ENCODE measurements at regions of chr15 and their contacts with region 1.

Region 1: GRCh38 chr15:52331490-52332240 is 36.1 kb upstream of the MYO5C start:
- DNase-seq: peak in 8 of 9 experiments; percentile 25 to 84 (median 44)
- ATAC-seq: peak; percentile 99
- H3K4me3 ChIP-seq: no peak overlapping the region
- H3K4me3 Mint-ChIP-seq: no peak overlapping the region
- H3K27ac ChIP-seq: peak overlapping the region in 1 of 2 experiments; percentile 14
- H3K27ac Mint-ChIP-seq: peak overlapping the region; percentile 45
- H3K4me1 ChIP-seq: peaks cover 10% of the 10 kb centered on the region
- H3K4me1 Mint-ChIP-seq: peaks cover 12% of the 10 kb centered on the region
- H3K27me3 ChIP-seq: no peaks in the 10 kb centered on the region
- H3K27me3 Mint-ChIP-seq: no peaks in the 10 kb centered on the region
- CTCF ChIP-seq: peak; percentile 63

Region 2: DNA sequence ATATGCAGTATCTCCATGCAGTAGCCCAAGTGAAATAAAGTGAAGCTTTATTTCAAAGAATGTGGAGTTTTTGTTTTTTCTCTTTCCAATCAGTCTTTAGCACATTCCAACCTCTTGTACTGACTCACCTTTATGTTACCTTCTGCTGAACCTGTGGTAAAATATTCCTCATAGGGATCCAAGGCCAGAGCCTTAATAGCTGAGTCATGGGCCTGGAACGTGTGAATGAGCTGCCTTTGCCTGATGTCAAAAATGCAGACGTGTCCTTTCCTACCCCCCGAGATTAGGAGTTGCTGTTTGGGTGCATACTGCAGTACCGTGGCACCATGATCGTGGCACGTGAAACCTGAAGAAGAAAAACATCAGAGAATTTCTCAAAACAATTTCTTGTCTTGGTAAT is 881.7 kb before region 1 on chr15:
- CTCF ChIA-PET with region 1: no interaction called
- POLR2A ChIA-PET with region 1: no interaction called
- intact Hi-C with region 1: no loop called
- DNase-seq: no peak
- ATAC-seq: no peak
- H3K4me3 ChIP-seq: no peak overlapping the region
- H3K4me3 Mint-ChIP-seq: no peak overlapping the region
- H3K27ac ChIP-seq: no peak overlapping the region
- H3K27ac Mint-ChIP-seq: no peak overlapping the region
- H3K4me1 ChIP-seq: no peaks in the 10 kb centered on the region
- H3K4me1 Mint-ChIP-seq: no peaks in the 10 kb centered on the region
- H3K27me3 ChIP-seq: no peaks in the 10 kb centered on the region
- H3K27me3 Mint-ChIP-seq: no peaks in the 10 kb centered on the region
- CTCF ChIP-seq: no peak

Region 3: DNA sequence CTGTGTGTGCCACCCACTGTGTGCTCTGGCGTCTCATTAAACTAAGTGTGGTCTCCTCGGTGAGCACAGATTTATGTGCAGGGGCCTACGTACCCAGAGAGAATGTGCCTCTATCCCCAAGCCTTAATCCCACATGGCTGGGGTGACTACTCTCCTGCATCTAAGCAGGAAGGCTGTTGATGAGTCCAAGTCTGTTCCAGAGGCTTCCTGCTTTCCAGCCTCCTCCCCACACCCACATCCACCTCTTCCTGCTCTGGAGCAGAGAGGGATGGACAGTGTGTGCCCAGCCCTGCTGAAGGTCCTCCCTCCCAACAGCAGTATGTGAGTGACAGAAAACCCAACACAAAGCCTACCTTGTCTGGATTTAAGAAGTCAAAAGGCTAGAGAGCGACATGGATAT is 180.3 kb before region 1 on chr15:
- CTCF ChIA-PET with region 1: no interaction called
- POLR2A ChIA-PET with region 1: no interaction called
- intact Hi-C with region 1: no loop called
- DNase-seq: no peak
- ATAC-seq: no peak
- H3K4me3 ChIP-seq: no peak overlapping the region
- H3K4me3 Mint-ChIP-seq: no peak overlapping the region
- H3K27ac ChIP-seq: no peak overlapping the region
- H3K27ac Mint-ChIP-seq: no peak overlapping the region
- H3K4me1 ChIP-seq: no peaks in the 10 kb centered on the region
- H3K4me1 Mint-ChIP-seq: peaks cover 6% of the 10 kb centered on the region
- H3K27me3 ChIP-seq: no peaks in the 10 kb centered on the region
- H3K27me3 Mint-ChIP-seq: no peaks in the 10 kb centered on the region
- CTCF ChIP-seq: no peak

Region 4: GRCh38 chr15:52466134-52466701 is 134.6 kb after region 1 on chr15:
- CTCF ChIA-PET with region 1: no interaction called
- POLR2A ChIA-PET with region 1: no interaction called
- intact Hi-C with region 1: loop called in 1 of 2 experiments (anchors 1 kb)
- DNase-seq: peak in 3 of 9 experiments; percentile 31 to 56 (median 34)
- ATAC-seq: peak; percentile 58
- H3K4me3 ChIP-seq: no peak overlapping the region
- H3K4me3 Mint-ChIP-seq: no peak overlapping the region
- H3K27ac ChIP-seq: peak overlapping the region in 1 of 2 experiments; percentile 83
- H3K27ac Mint-ChIP-seq: peak overlapping the region; percentile 52
- H3K4me1 ChIP-seq: peaks cover 10% of the 10 kb centered on the region
- H3K4me1 Mint-ChIP-seq: peaks cover 39% of the 10 kb centered on the region
- H3K27me3 ChIP-seq: no peaks in the 10 kb centered on the region
- H3K27me3 Mint-ChIP-seq: no peaks in the 10 kb centered on the region
- CTCF ChIP-seq: no peak

Region 5: DNA sequence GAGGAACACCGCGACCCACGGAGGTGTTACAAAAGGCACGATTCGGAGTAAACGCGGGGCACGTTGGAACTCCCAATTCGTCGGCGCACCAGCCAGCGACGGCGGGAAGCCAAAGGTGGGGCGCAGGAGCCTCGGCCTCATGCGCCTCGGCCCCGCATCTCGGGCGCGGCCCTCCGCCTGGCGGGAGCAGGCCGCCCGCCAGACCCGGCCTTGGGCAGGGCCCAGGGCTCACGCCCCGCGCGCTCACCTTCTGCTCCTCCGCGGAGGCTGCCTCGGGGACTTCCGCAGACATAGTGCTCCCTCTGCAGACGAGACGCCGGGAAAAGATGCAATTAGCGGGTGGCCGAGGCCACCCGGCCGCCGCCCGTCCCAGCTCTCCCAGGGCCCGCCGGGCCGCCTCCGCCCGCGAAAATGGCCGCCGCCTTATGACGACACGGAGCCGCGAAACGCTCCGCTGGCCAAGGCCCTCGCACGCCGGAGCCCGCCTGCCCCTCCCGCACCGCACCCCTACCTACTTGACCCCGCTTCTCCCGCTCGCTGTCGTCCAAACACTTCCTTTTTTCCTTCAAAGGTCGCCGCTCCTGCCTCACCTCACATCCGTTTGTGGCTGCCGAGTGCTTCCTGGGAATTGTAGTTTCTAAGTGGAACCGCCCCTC is 237.1 kb after region 1 on chr15 and contains the start of gene ARPP19:
- CTCF ChIA-PET with region 1: interaction called, 4 read pairs
- POLR2A ChIA-PET with region 1: no interaction called
- intact Hi-C with region 1: loop called in 1 of 2 experiments (anchors 1 kb)
- DNase-seq: peak; percentile 56 to 90 (median 77)
- ATAC-seq: peak; percentile 72
- H3K4me3 ChIP-seq: peak within 1 kb of the TSS; percentile 66 to 74
- H3K4me3 Mint-ChIP-seq: peak within 1 kb of the TSS; percentile 94
- H3K27ac ChIP-seq: peak within 1 kb of the TSS; percentile 93 to 95
- H3K27ac Mint-ChIP-seq: peak within 1 kb of the TSS; percentile 99
- H3K4me1 ChIP-seq: peaks cover 29% of the 10 kb centered on the region
- H3K4me1 Mint-ChIP-seq: peaks cover 40% of the 10 kb centered on the region
- H3K27me3 ChIP-seq: no peaks in the 10 kb centered on the region
- H3K27me3 Mint-ChIP-seq: no peaks in the 10 kb centered on the region
- CTCF ChIP-seq: no peak
- total RNA-seq, gene ARPP19: 141 to 156 TPM

Region 6: GRCh38 chr15:52609593-52609992 is 277.9 kb after region 1 on chr15:
- CTCF ChIA-PET with region 1: interaction called, 4 read pairs
- POLR2A ChIA-PET with region 1: no interaction called
- intact Hi-C with region 1: loop called in 1 of 2 experiments (anchors 5 kb)
- DNase-seq: no peak
- ATAC-seq: no peak
- H3K4me3 ChIP-seq: no peak overlapping the region
- H3K4me3 Mint-ChIP-seq: no peak overlapping the region
- H3K27ac ChIP-seq: no peak overlapping the region
- H3K27ac Mint-ChIP-seq: no peak overlapping the region
- H3K4me1 ChIP-seq: no peaks in the 10 kb centered on the region
- H3K4me1 Mint-ChIP-seq: no peaks in the 10 kb centered on the region
- H3K27me3 ChIP-seq: no peaks in the 10 kb centered on the region
- H3K27me3 Mint-ChIP-seq: no peaks in the 10 kb centered on the region
- CTCF ChIP-seq: no peak

Region 7: GRCh38 chr15:52735231-52736089 is 403.8 kb after region 1 on chr15:
- CTCF ChIA-PET with region 1: interaction called, 58 read pairs
- POLR2A ChIA-PET with region 1: interaction called, 4 read pairs
- intact Hi-C with region 1: loop called (anchors 1 kb)
- DNase-seq: peak; percentile 39 to 83 (median 64)
- ATAC-seq: peak; percentile 89
- H3K4me3 ChIP-seq: no peak overlapping the region
- H3K4me3 Mint-ChIP-seq: no peak overlapping the region
- H3K27ac ChIP-seq: no peak overlapping the region
- H3K27ac Mint-ChIP-seq: no peak overlapping the region
- H3K4me1 ChIP-seq: peaks cover 3% of the 10 kb centered on the region
- H3K4me1 Mint-ChIP-seq: peaks cover 5% of the 10 kb centered on the region
- H3K27me3 ChIP-seq: no peaks in the 10 kb centered on the region
- H3K27me3 Mint-ChIP-seq: peaks cover 7% of the 10 kb centered on the region
- CTCF ChIP-seq: peak; percentile 95

Region 8: GRCh38 chr15:53037904-53038654 is 706.4 kb after region 1 on chr15:
- CTCF ChIA-PET with region 1: no interaction called
- POLR2A ChIA-PET with region 1: no interaction called
- intact Hi-C with region 1: no loop called
- DNase-seq: no peak
- ATAC-seq: no peak
- H3K4me3 ChIP-seq: no peak overlapping the region
- H3K4me3 Mint-ChIP-seq: no peak overlapping the region
- H3K27ac ChIP-seq: no peak overlapping the region
- H3K27ac Mint-ChIP-seq: no peak overlapping the region
- H3K4me1 ChIP-seq: no peaks in the 10 kb centered on the region
- H3K4me1 Mint-ChIP-seq: no peaks in the 10 kb centered on the region
- H3K27me3 ChIP-seq: no peaks in the 10 kb centered on the region
- H3K27me3 Mint-ChIP-seq: peaks cover 16% of the 10 kb centered on the region
- CTCF ChIP-seq: no peak

Region 9: DNA sequence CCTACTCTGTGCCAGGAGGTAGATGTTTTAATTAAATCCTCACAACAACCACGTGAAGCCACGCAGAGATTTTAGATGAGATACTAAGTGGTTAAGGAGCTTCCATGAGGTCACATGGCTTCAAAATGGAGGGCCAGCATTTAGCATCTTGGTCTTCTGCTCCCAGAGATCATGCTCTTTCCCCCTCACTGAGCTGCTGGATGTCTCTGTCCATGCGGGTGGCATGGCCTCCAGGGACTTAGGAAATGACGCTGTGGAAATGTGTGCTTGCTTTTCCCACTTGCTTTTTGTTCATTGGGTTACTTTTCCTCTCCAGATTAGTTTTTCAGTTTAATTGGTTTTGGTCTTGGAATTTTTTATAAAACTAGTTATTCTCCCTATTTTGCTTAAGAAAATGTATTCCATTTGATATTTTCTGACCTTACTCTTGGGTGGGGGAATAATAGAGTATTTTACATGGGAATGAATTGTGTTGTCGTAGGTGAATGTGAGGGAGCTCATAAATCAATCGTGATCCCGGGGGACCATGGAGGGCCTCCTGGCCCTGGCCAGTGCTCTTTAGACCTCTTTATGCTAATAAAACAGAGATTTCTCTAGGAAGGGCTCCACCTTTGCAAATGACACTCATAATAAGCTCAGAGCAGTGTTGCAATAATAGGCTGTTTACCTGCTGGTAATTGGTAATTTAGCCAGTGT is 834.5 kb after region 1 on chr15:
- CTCF ChIA-PET with region 1: no interaction called
- POLR2A ChIA-PET with region 1: no interaction called
- intact Hi-C with region 1: no loop called
- DNase-seq: no peak
- ATAC-seq: no peak
- H3K4me3 ChIP-seq: no peak overlapping the region
- H3K4me3 Mint-ChIP-seq: no peak overlapping the region
- H3K27ac ChIP-seq: no peak overlapping the region
- H3K27ac Mint-ChIP-seq: no peak overlapping the region
- H3K4me1 ChIP-seq: no peaks in the 10 kb centered on the region
- H3K4me1 Mint-ChIP-seq: no peaks in the 10 kb centered on the region
- H3K27me3 ChIP-seq: no peaks in the 10 kb centered on the region
- H3K27me3 Mint-ChIP-seq: no peaks in the 10 kb centered on the region
- CTCF ChIP-seq: no peak

Measured in CD8-positive, alpha-beta T cell (primary cell).